B cell (primary cell): ENCODE measurements at regions of chr12 and their contacts with region 1.

Region 1: DNA sequence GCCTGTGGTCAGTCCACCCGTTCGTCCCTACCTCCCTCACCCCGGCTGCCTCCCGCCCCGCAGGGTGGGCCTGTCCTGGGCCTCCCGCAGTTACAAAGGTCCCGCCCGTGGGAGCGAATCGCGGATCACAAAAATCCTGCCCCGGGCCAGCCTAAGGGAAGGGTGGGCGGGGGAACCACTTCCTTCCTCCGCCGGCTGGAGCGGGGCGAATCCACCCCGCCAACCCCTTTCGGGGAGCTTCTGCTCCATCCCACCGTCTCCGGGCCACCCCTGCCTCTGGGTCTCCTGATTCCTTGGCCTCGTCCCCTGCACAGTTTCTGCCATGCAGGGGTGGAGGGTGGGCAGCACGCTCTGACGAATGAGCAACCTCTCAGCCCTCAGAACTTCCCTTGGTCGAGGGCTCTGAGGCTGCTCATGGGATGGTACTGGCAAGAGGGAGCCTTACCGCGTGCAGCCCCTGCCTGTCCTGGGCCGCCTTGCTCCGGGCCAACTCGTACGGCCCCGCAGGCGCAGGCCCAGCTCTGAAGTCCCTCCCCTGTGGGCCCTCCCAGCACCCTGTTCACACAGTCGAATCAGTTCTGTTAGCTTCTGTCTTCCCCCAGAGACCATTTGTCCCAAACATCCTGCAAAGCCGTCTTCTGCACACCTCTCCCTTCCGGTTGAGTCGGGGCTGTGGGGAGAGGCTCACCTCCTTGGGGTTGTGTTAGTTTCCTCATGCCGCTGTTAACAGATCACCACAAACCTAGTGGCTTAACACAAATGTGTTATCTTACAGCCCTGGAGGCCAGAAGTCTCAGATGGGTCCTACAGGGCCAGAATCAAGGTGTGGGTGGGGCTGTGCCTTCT is 589 bp upstream of the HVCN1 start:
- DNase-seq: peak; percentile 79
- ATAC-seq: peak; percentile 71
- H3K4me3 ChIP-seq: peak overlapping the region in 4 of 5 experiments; percentile 72 to 98 (median 88)
- H3K4me3 Mint-ChIP-seq: peak overlapping the region; percentile 99
- H3K27ac ChIP-seq: peak overlapping the region; percentile 55 to 70
- H3K27ac Mint-ChIP-seq: peak overlapping the region; percentile 96
- H3K4me1 ChIP-seq: peaks cover 54 to 69% of the 10 kb centered on the region in 2 donors
- H3K4me1 Mint-ChIP-seq: peaks cover 71% of the 10 kb centered on the region
- H3K27me3 ChIP-seq: no peaks in the 10 kb centered on the region
- H3K27me3 Mint-ChIP-seq: no peaks in the 10 kb centered on the region
- CTCF ChIP-seq: no peak

Region 2: GRCh38 chr12:110563702-110564640 is 125.5 kb before region 1 on chr12:
- CTCF ChIA-PET with region 1: interaction called, 3 read pairs
- POLR2A ChIA-PET with region 1: no interaction called
- intact Hi-C with region 1: loop called (anchors 5 kb)
- DNase-seq: no peak
- ATAC-seq: no peak
- H3K4me3 ChIP-seq: no peak overlapping the region
- H3K4me3 Mint-ChIP-seq: peak overlapping the region; percentile 68
- H3K27ac ChIP-seq: peak overlapping the region; percentile 75 to 82
- H3K27ac Mint-ChIP-seq: peak overlapping the region; percentile 81
- H3K4me1 ChIP-seq: peaks cover 73 to 81% of the 10 kb centered on the region in 2 donors
- H3K4me1 Mint-ChIP-seq: peaks cover 73% of the 10 kb centered on the region
- H3K27me3 ChIP-seq: no peaks in the 10 kb centered on the region
- H3K27me3 Mint-ChIP-seq: no peaks in the 10 kb centered on the region
- CTCF ChIP-seq: no peak

Region 3: DNA sequence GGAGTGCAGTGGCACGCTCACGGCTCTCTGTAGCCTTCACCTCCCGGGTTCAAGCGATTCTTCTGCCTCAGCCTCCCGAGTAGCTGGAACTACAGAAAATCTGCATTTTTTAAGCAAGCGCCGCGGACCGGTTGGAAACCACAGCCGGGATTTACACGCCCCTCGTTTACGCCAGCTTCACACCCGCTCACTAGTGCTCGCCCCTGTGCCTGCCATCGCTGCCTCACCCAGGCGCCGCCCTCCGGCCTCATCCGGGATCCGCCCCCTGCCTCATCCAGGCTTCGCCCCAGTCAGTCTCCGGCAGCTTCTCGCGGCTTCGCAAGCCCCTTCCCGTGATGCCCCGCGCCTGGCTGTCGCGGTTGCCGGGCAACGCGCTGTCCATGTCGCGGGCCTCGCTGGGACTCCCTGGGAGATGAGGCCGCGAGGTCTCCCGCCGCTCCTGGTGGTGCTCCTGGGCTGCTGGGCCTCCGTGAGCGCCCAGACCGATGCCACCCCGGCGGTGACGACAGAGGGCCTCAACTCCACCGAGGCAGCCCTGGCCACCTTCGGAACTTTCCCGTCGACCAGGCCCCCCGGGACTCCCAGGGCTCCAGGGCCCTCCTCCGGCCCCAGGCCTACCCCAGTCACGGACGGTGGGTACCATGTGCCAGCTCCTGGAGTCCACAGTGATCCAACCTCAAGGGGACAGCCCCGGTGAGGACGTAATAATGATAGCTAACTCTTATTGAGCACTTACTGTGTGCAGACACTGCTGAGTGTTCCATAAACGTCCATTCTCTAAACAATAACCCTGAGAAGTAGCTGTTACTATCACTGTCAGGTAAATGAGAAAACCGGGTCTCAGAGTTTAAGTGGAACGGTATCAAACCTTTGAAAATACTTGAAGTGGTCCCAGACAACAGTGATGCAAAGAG is 75.5 kb before region 1 on chr12 and contains the start of gene TCTN1:
- CTCF ChIA-PET with region 1: interaction called, 4 read pairs
- POLR2A ChIA-PET with region 1: interaction called, 11 read pairs
- intact Hi-C with region 1: loop called (anchors 2 kb)
- DNase-seq: peak; percentile 94
- ATAC-seq: peak; percentile 99
- H3K4me3 ChIP-seq: peak within 1 kb of the TSS; percentile 57 to 84 (median 70)
- H3K4me3 Mint-ChIP-seq: peak within 1 kb of the TSS; percentile 91
- H3K27ac ChIP-seq: peak within 1 kb of the TSS; percentile 83 to 98
- H3K27ac Mint-ChIP-seq: peak within 1 kb of the TSS; percentile 96
- H3K4me1 ChIP-seq: peaks cover 42 to 65% of the 10 kb centered on the region in 2 donors
- H3K4me1 Mint-ChIP-seq: peaks cover 49% of the 10 kb centered on the region
- H3K27me3 ChIP-seq: no peaks in the 10 kb centered on the region
- H3K27me3 Mint-ChIP-seq: no peaks in the 10 kb centered on the region
- CTCF ChIP-seq: no peak
- total RNA-seq, gene TCTN1: 69.8 and 74.5 TPM in 2 replicates

Region 4: DNA sequence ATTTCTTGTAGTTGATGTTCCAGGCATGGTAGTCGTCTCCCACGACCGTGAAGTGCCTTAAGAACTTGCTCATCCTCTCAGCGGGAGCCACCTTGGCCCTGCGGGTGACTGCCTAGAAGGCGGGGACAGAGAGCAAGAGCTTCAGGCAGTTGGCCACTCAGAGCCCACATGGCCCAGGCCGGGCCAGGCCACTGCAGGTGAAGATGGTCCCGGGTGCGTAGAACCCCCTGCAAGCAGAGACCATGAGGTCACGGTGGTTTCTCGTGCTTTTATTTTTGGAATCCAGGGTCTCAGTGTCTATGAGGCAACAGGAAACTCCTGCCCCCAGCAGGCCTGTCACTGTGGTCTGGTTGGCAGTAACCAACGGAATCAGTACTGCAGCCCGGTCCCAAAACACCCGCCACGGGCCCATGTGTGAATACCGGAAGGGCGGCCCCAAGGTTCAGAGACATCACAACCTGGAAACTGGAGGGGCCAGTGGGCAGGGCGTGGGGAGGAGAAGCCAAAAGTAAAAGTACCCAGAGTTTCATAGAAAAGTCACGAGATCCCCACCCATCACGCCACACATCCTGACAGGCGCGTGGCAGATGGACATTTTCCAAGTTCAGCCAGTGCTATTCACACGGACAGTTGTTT is 28.0 kb before region 1 on chr12:
- CTCF ChIA-PET with region 1: interaction called, 3 read pairs
- POLR2A ChIA-PET with region 1: interaction called, 4 read pairs
- intact Hi-C with region 1: loop called (anchors 1 kb)
- DNase-seq: peak; percentile 93
- ATAC-seq: peak; percentile 85
- H3K4me3 ChIP-seq: peak overlapping the region in 4 of 5 experiments; percentile 5 to 44 (median 16)
- H3K4me3 Mint-ChIP-seq: peak overlapping the region; percentile 92
- H3K27ac ChIP-seq: peak overlapping the region; percentile 96 to 99
- H3K27ac Mint-ChIP-seq: peak overlapping the region; percentile 98
- H3K4me1 ChIP-seq: peaks cover 59 to 82% of the 10 kb centered on the region in 2 donors
- H3K4me1 Mint-ChIP-seq: peaks cover 81% of the 10 kb centered on the region
- H3K27me3 ChIP-seq: no peaks in the 10 kb centered on the region
- H3K27me3 Mint-ChIP-seq: no peaks in the 10 kb centered on the region
- CTCF ChIP-seq: no peak

Region 5: GRCh38 chr12:110677206-110677911 is 12.1 kb before region 1 on chr12:
- CTCF ChIA-PET with region 1: interaction called, 7 read pairs
- POLR2A ChIA-PET with region 1: interaction called, 28 read pairs
- intact Hi-C with region 1: loop called (anchors 1 kb)
- DNase-seq: peak; percentile 76
- ATAC-seq: peak; percentile 65
- H3K4me3 ChIP-seq: peak overlapping the region; percentile 1 to 39 (median 30)
- H3K4me3 Mint-ChIP-seq: peak overlapping the region; percentile 70
- H3K27ac ChIP-seq: peak overlapping the region; percentile 68 to 82
- H3K27ac Mint-ChIP-seq: peak overlapping the region; percentile 82
- H3K4me1 ChIP-seq: peaks cover 96 to 100% of the 10 kb centered on the region in 2 donors
- H3K4me1 Mint-ChIP-seq: peaks cover 85% of the 10 kb centered on the region
- H3K27me3 ChIP-seq: no peaks in the 10 kb centered on the region
- H3K27me3 Mint-ChIP-seq: no peaks in the 10 kb centered on the region
- CTCF ChIP-seq: no peak

Region 6: DNA sequence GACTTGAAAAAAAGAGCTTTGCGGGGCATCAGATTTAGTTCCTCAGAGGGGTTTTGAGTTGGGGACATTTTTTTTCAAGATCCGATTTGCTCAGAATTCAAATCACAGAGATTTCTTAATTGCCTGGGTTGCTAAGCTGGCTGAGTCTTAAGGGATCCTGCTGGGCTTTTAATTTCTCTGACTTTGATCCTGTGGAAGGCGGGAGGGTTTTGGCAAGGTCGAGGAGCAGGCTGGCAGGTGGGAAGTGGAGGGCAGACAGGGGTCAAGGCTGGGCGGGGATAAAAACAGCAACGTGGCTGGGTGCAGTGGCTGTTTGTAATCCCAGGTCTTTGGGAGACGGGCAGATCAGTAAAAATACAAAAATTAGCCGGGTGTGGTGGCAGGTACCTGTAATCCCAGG is 123.8 kb after region 1 on chr12:
- CTCF ChIA-PET with region 1: no interaction called
- POLR2A ChIA-PET with region 1: no interaction called
- intact Hi-C with region 1: no loop called
- DNase-seq: no peak
- ATAC-seq: no peak
- H3K4me3 ChIP-seq: no peak overlapping the region
- H3K4me3 Mint-ChIP-seq: no peak overlapping the region
- H3K27ac ChIP-seq: no peak overlapping the region
- H3K27ac Mint-ChIP-seq: no peak overlapping the region
- H3K4me1 ChIP-seq: peaks cover 0 to 5% of the 10 kb centered on the region in 2 donors
- H3K4me1 Mint-ChIP-seq: peaks cover 2% of the 10 kb centered on the region
- H3K27me3 ChIP-seq: peaks cover 0 to 6% (median 1%) of the 10 kb centered on the region in 4 experiments
- H3K27me3 Mint-ChIP-seq: peaks cover 15% of the 10 kb centered on the region
- CTCF ChIP-seq: no peak